ENCODE measurements at regions of chr9 and their contacts with region 1.

Region 1: DNA sequence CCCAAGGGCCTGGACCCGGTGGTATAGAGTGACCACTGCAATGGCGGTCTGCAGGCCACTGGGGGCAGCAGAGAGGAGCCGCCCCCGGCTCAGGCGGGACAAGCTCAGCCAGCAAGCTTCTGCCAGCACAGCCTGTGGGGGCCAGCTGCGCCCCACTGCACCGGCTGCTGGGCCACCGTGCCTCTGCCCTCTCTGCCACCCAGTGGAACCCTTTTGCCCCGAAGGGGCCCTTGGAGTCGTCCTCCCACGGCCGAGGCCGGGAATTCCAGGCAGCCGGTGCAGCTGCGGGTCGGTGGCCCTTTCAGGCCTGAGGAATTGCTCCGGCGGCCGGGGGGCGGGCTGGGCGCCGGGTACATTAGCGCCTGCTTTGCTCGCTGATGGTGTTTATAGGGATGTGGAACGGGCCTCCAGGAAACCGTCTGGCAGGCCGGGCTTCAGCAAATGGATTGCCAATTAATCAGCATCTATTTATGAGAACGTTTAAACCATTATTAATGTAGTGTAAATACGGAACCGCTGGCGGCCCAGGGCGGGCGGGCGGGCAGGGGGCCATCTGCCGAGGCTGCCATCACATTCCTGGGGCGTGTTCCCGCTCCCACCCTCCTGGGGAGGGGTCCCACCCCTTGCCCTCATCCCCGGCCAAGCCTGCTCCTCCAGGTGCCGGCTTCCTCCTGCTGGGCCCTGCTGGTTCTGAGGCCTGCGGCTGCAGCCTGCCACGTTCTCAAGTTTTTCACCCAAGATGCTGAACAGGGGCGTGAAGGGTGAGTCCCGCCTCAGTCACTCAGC is 127.4 kb downstream of the BARX1 start:
- DNase-seq: peak; percentile 14
- H3K4me3 Mint-ChIP-seq: no peak overlapping the region
- H3K27ac Mint-ChIP-seq: no peak overlapping the region
- H3K4me1 Mint-ChIP-seq: peaks cover 4% of the 10 kb centered on the region
- H3K27me3 Mint-ChIP-seq: peaks cover 25% of the 10 kb centered on the region

Region 2: DNA sequence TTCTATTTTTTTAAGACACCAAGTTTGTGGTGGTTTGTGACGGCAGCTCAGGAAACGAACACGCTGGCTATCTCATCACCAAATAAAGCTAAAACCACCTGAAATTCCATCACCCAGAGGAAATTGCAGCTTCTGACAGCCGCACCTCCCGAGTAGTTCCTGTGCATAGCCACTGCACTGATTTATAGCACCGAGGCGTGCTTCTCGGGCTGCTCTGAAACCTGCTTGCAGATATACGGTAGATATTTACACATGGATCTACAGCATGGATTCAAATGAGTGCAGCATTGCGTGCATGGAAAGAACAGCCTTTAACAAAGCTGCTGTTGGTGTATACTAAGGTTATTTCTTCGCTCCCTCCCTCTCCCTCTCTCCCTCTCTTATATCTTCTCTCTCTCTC is 97.5 kb before region 1 on chr9:
- intact Hi-C with region 1: no loop called
- DNase-seq: no peak
- H3K4me3 Mint-ChIP-seq: no peak overlapping the region
- H3K27ac Mint-ChIP-seq: no peak overlapping the region
- H3K4me1 Mint-ChIP-seq: no peaks in the 10 kb centered on the region
- H3K27me3 Mint-ChIP-seq: peaks cover 7% of the 10 kb centered on the region

Region 3: DNA sequence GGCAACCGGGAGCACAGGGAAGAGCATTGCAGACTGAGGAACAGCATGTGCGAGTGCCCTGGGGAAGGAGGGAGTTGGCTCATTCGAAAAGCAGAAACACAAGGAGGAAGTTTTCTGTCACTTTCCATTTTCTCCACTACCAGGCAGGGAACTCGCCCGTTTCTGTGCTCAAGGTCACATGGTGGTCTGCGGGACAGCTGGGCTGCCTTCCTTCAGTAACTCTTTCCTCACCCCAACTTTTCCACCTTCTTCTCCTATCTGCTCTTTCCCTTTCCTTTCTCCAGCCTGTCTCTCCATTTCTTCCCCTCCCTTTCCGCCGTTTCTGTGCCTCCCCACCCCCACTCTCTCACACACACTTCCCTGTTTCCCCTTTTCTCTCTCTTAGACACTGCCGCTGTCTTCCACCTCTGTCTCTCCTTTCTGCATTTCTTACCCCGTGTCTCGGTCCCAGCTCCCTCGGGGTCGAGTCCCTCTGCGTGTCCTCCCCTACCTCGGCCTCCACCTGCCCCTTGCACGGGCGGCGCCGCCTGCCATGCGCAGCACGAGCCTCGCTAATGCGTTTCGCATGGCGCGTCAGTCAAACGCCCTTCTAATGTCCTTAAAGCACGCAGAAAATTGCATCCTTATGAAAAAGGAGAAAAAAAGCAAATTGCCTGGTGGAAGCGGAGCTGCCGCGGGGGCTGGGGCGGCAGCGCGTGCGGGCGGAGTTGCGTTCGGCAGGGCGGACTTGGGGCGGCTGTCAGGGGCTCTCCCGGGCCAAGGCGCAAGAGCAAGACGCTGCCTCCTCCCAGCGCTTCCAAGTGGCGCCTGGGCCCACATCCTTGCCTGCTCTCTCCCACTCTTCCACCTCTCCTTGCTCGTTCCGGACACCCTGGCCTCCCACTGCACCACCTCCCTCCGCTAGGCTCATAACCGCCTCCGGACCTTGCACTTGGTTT is 117.9 kb after region 1 on chr9:
- intact Hi-C with region 1: loop called (anchors 5 kb)
- DNase-seq: no peak
- H3K4me3 Mint-ChIP-seq: peak overlapping the region; percentile 38
- H3K27ac Mint-ChIP-seq: no peak overlapping the region
- H3K4me1 Mint-ChIP-seq: peaks cover 16% of the 10 kb centered on the region
- H3K27me3 Mint-ChIP-seq: peaks cover 72% of the 10 kb centered on the region

Region 4: DNA sequence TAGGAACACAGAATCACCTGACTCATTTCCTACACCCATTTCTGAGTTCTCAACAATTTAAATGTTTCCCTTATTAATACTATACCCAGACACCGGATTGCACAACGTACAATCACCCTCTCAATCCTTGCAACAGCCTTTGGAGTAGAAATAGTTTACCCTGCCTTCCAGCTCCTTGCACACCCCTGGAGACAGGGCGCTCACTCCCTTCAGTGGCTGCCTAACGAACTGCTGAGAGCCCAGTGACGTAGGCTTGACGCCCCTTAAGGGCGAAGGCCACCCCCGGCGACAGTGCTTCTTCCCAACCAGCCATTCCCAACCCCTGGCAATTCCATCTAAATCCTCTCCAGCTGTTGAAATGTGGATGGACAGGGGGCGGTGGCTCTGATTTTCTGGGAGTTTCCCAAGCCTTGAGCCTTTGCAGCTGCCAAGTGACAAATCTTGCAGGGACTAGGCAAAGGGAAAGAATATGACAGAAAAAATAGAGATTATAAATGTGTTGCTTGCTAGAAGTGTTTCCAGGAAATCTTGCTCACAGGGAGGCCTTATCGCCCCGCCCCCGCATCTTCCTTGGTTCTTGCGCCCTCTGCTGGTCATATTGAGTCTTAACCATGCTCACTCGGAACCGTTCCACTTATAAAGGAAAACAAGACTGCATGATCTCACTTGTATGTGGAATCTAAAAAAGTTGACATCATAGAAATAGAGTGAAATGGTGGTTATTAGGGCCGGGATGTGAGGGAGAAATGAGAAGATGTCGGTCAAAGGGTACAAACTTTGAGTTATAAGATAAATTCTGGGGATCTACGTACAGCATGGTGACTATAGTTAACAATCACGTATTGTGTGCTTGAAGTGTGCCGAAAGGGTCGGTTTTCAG is 135.1 kb after region 1 on chr9:
- intact Hi-C with region 1: loop called (anchors 1 kb)
- DNase-seq: peak; percentile 73
- H3K4me3 Mint-ChIP-seq: no peak overlapping the region
- H3K27ac Mint-ChIP-seq: no peak overlapping the region
- H3K4me1 Mint-ChIP-seq: peaks cover 16% of the 10 kb centered on the region
- H3K27me3 Mint-ChIP-seq: peaks cover 39% of the 10 kb centered on the region

Region 5: GRCh38 chr9:94785215-94786169 is 957.8 kb after region 1 on chr9:
- intact Hi-C with region 1: no loop called
- DNase-seq: no peak
- H3K4me3 Mint-ChIP-seq: no peak overlapping the region
- H3K27ac Mint-ChIP-seq: no peak overlapping the region
- H3K4me1 Mint-ChIP-seq: peaks cover 17% of the 10 kb centered on the region
- H3K27me3 Mint-ChIP-seq: no peaks in the 10 kb centered on the region

Measured in activated T-helper 1 cell treated with anti-CD3 and anti-CD28 coated beads, Interleukin-12 subunit alpha, Interleukin-12 subunit beta, Interleukin-2, Interleukin-4 antibody, amounts not matched to agents 30 ng/mL and 10 ng/mL and 1 ng/mL, durations not matched to agents 14 hours and 24 hours and 36 hours (primary cell).